ENCODE measurements at regions of chr1 and their contacts with region 1.

Region 1: DNA sequence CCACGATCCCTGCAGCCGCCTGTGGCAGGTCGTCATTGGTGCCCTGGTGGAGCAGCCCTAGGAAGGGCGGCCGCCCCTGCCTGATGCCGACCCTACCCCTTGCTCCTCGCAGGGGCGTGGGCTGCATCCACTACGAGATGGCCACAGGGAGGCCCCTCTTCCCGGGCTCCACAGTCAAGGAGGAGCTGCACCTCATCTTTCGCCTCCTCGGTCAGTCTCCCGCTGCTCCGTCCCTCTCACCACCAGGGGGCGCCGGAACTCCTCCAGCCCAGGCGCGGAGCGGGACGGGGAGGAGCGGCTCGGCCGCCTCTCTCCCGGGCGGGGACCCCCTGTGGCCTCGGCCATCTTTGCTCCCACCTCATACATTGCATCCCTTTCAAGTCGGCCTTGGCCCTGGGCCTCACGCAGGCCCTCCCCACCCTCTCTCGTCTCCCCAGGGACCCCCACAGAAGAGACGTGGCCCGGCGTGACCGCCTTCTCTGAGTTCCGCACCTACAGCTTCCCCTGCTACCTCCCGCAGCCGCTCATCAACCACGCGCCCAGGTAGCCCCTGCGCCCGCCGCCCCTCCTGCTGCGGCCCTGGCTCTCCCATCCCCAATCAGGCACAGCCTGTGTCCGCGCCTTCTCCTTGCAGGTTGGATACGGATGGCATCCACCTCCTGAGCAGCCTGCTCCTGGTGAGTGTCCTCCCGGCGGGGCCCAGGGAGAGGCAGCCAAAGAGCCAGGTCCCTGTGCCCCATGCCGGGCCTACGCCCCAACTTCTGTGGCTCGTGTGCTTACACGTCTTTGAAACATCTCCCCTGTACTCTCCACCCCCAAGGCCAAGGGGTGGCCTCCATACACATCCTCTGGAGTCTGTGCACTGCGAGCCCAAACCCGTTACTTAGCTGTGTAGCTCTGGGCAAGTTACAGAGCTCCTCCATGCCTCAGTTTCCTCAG is 24.7 kb downstream of the CDK18 start:
- DNase-seq: peak; percentile 89
- H3K27ac ChIP-seq: no peak overlapping the region
- CTCF ChIP-seq: peak; percentile 93

Region 2: GRCh38 chr1:205470131-205470530 is 59.0 kb before region 1 on chr1:
- CTCF ChIA-PET with region 1: no interaction called
- POLR2A ChIA-PET with region 1: no interaction called
- DNase-seq: no peak
- H3K27ac ChIP-seq: no peak overlapping the region
- CTCF ChIP-seq: no peak

Region 3: GRCh38 chr1:205543411-205544301 is 14.5 kb after region 1 on chr1:
- CTCF ChIA-PET with region 1: interaction called, 16 read pairs
- POLR2A ChIA-PET with region 1: no interaction called
- DNase-seq: peak; percentile 83
- H3K27ac ChIP-seq: peak overlapping the region; percentile 77
- CTCF ChIP-seq: no peak

Region 4: DNA sequence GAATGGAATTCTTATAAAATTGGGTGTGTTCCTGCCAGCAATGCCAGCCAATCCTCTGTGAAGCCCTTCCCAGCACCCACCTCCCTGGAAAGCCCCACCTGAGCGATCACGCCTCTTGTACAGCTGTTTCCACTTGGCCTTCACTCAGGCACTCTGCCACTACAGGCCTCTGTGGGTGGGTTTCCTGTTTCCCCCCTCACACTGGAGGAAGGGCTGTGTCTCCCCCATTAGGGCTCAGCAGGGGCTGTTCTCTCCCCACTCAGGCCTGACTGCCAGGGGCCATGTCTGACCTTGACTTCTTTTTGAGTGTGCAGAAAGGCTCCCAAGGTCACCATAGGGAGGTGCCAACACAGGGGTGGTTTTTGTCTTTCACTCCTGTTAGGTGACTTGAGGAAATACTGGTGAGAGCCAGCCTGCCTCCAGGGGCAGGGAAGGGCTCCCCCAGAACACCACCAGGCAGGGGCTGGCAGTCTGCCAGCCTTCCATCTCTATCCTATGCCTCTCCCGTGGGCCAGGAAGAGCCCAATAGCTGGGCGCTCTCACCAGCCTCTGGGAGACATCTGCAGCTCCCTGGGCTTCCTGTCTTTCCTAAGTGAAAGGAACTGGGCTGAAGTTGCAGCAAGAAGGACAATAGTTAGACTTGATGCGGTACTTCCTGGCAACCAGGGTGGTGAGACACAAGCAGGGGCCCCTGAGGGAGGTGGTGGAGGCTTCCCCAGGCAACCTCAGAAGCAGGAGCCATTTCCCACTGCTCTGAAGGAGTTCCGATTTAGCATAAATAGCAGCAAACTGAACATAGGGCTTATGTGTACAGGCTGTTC is 53.5 kb after region 1 on chr1:
- CTCF ChIA-PET with region 1: interaction called, 10 read pairs
- POLR2A ChIA-PET with region 1: no interaction called
- DNase-seq: no peak
- H3K27ac ChIP-seq: peak overlapping the region; percentile 7; the same call in 1 of the 2 replicates
- CTCF ChIP-seq: no peak

Region 5: GRCh38 chr1:205631727-205632373 is 102.7 kb after region 1 on chr1 and contains the start of gene ELK4:
- CTCF ChIA-PET with region 1: interaction called, 10 read pairs
- POLR2A ChIA-PET with region 1: no interaction called
- DNase-seq: peak; percentile 99
- H3K27ac ChIP-seq: peak within 1 kb of the TSS; percentile 98
- CTCF ChIP-seq: peak; percentile 76

Region 6: GRCh38 chr1:205711104-205712020 is 182.2 kb after region 1 on chr1:
- CTCF ChIA-PET with region 1: interaction called, 14 read pairs
- POLR2A ChIA-PET with region 1: no interaction called
- DNase-seq: peak; percentile 74
- H3K27ac ChIP-seq: no peak overlapping the region
- CTCF ChIP-seq: peak; percentile 79